Heart right ventricle (tissue), 16 donors: ENCODE measurements at regions of chr1 and their contacts with region 1.

Region 1: DNA sequence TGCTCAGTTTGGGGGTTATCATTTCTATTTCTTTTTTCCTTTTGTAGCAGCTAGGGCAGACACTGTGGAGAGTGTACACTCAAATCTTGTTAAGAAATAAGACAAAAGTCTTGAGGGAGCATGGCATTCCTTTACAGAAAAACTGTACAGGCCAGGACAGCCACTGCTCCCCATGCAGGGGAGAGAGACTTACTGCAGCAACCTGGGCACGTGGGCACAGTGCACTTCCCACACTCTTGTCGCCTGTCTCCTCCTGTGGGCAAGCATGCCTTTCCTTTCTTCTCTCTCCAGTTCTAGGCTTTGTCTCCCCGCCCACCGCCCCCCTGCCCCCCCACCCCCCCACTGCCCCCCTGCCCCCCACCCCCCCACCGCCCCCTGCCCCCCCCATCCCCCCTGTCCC is 51.9 kb downstream of the PHC2 start:
- DNase-seq: no peak
- ATAC-seq: peak in 4 of 8 donors; percentile 19 to 48 (median 44)
- H3K4me3 ChIP-seq: no peak overlapping the region
- H3K27ac ChIP-seq: peak overlapping the region in 6 of 10 donors; percentile 32 to 65 (median 46)
- H3K4me1 ChIP-seq: peaks cover 12 to 81% (median 48%) of the 10 kb centered on the region in 9 donors
- H3K27me3 ChIP-seq: no peaks in the 10 kb centered on the region
- CTCF ChIP-seq: peak in 3 of 9 donors; percentile 9 to 17 (median 16)

Region 2: DNA sequence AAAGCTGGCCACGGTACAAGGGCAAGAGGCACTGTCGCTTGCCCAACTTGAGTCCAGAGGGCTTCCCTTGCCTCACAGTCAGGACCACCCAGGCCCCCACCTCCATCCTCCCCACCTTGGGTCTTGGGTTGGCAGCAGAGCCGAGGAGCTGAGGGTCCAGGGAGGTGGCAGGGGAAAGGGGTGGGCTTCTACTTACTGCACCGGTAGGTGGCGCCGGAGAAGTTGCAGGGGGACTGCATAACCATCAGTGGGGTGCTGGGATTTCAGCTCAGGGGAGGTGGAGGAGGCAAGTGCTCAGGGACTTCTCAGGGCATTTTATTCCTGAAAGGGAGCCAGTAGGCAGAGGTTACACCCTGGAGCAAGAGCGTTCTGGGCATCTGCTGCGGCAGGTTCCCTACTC is 241.2 kb before region 1 on chr1:
- intact Hi-C with region 1: loop called in 1 of 10 experiments (anchors 10 kb)
- DNase-seq: peak; percentile 30 to 58
- ATAC-seq: peak in 4 of 8 donors; percentile 36 to 61 (median 50)
- H3K4me3 ChIP-seq: no peak overlapping the region
- H3K27ac ChIP-seq: no peak overlapping the region
- H3K4me1 ChIP-seq: peaks cover 0 to 14% (median 2%) of the 10 kb centered on the region in 9 donors
- H3K27me3 ChIP-seq: no peaks in the 10 kb centered on the region
- CTCF ChIP-seq: peak in 8 of 9 donors; percentile 36 to 67 (median 58)

Region 3: GRCh38 chr1:33430692-33431593 is 52.0 kb after region 1 on chr1 and contains the start of gene PHC2:
- intact Hi-C with region 1: loop called in 5 of 10 experiments (anchors 5 to 10 kb)
- DNase-seq: peak; percentile 97 to 98
- ATAC-seq: peak; percentile 96 to 98 (median 97)
- H3K4me3 ChIP-seq: peak within 1 kb of the TSS; percentile 69 to 95 (median 76)
- H3K27ac ChIP-seq: peak within 1 kb of the TSS; percentile 62 to 89 (median 86)
- H3K4me1 ChIP-seq: peaks cover 0 to 79% (median 50%) of the 10 kb centered on the region in 9 donors
- H3K27me3 ChIP-seq: no peaks in the 10 kb centered on the region
- CTCF ChIP-seq: peak in 8 of 9 donors; percentile 32 to 66 (median 42)
- total RNA-seq, gene PHC2: 96.7 to 136 (median 102) TPM

Region 4: GRCh38 chr1:33460947-33461629 is 82.1 kb after region 1 on chr1:
- intact Hi-C with region 1: loop called in 7 of 10 experiments (anchors 5 to 10 kb)
- DNase-seq: peak; percentile 44 to 77
- ATAC-seq: peak; percentile 61 to 87 (median 75)
- H3K4me3 ChIP-seq: no peak overlapping the region
- H3K27ac ChIP-seq: peak overlapping the region; percentile 59 to 93 (median 84)
- H3K4me1 ChIP-seq: peaks cover 2 to 74% (median 35%) of the 10 kb centered on the region in 9 donors
- H3K27me3 ChIP-seq: no peaks in the 10 kb centered on the region
- CTCF ChIP-seq: no peak

Region 5: DNA sequence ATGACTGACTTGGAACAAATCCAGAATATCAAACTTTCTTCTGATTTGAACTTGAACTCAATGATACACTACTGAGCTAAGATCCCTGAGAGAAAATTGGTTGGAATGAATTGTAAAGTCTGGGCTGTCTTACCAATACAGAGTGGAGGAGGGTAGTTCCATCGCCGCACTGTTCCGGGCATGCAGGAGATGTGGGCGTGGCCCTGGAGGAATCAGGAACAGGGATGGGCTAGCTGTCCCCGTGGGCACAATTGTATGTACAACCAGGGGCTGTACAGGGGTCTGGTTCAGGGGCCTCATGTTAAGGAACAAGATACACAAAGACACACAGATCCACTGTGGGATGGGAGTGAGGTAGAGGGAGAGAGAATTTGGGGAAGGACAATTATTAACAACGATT is 237.8 kb after region 1 on chr1:
- intact Hi-C with region 1: loop called in 2 of 10 experiments (anchors 5 to 10 kb)
- DNase-seq: no peak
- ATAC-seq: peak in 1 of 8 donors; percentile 29
- H3K4me3 ChIP-seq: no peak overlapping the region
- H3K27ac ChIP-seq: no peak overlapping the region
- H3K4me1 ChIP-seq: peaks cover 0 to 6% (median 0%) of the 10 kb centered on the region in 9 donors
- H3K27me3 ChIP-seq: peaks cover 0 to 12% (median 4%) of the 10 kb centered on the region in 7 donors
- CTCF ChIP-seq: no peak